ENCODE measurements at regions of chr7 and their contacts with region 1.

Region 1: DNA sequence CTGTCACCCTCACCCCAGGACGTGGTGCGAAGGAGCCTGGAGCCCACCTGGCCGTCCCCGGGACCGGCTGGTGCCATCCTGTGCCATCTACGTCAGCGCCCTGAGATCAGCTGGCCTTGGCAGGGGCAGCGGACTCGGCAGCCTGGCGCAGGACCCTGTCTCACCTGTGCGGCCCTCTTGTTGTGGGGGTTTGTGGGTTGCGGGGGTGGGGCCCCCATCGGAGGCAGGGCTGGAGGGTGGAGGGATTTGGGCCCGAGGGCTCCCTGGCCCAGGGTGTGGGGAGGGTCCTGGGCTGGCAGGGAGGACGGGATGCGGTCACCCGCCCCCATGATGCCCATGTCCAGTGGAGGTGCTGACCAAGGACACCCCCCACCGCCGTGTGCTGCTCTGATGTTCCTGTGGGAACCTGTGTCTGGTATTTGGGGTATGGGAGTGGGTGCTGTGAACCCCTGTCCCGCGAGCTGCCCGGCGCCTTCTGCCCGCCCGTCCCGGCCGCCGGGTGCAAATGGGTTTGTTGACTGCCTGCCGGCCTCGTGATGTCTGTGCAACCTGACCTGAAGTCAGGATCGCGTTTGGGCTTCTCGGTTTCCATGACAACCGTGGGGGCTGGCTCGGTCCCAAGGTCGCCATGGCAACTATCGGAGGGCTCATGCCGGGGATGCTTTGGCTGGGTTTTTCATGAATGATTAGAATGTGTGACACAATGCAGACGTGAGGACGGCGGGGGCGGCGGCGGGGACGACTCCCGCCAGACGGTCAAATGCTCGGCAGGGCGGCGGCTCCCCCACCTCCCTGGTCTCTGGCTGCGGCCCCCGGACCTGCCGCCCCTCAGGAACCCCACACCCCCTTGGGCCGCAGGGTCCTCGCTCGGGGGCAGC is 7.3 kb downstream of the MAFK start:
- DNase-seq: peak in 1 of 2 experiments; percentile 89
- H3K4me3 ChIP-seq: peak overlapping the region; percentile 53
- H3K27ac ChIP-seq: peak overlapping the region; percentile 69
- H3K4me1 ChIP-seq: peaks cover 47% of the 10 kb centered on the region
- H3K27me3 ChIP-seq: no peaks in the 10 kb centered on the region
- CTCF ChIP-seq: no peak

Region 2: DNA sequence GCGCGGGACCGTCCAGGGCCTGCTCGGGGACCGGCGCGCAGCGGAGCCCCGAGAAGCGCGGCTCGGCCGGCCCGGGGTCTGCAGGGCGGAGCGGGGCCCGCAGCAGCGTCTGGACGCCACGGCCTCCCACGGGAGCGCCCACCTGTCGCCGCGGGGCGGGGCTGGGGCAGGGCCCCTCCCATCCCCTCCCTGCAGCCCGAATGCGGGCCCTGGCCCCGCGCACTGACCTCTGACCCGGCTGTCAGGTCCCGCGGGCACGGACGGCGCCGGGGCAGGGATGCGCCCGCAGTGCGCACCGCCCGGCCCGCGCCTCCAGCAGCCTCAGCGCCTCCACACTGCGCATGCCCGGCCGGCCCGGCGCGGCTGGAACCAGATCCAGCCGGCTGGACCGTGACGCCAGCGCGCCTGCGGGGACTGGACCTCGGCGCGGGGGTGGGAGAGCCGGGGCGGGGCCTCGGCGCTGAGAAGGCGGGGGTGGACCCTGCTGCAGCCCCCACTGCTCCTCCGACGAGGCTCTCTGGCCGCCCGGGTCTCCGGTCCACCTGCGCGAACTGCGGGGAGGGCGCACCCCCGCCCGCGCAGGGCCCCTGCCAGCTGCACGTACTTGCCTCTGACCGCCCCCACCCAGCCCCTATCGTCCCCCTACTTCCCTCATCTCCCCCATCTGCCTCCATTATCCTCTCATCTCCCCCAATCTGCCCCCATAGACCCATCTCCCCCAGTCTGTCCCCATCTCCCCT is 509.6 kb before region 1 on chr7:
- CTCF ChIA-PET with region 1: no interaction called
- POLR2A ChIA-PET with region 1: no interaction called
- intact Hi-C with region 1: no loop called
- DNase-seq: peak; percentile 59 to 95
- H3K4me3 ChIP-seq: peak overlapping the region; percentile 69
- H3K27ac ChIP-seq: peak overlapping the region; percentile 35; the same call in 1 of the 2 replicates
- H3K4me1 ChIP-seq: peaks cover 14% of the 10 kb centered on the region
- H3K27me3 ChIP-seq: no peaks in the 10 kb centered on the region
- CTCF ChIP-seq: no peak

Region 3: GRCh38 chr7:1512781-1513656 is 24.8 kb before region 1 on chr7:
- CTCF ChIA-PET with region 1: interaction called, 12 read pairs
- POLR2A ChIA-PET with region 1: no interaction called
- intact Hi-C with region 1: loop called (anchors 2 kb)
- DNase-seq: peak; percentile 96
- H3K4me3 ChIP-seq: no peak overlapping the region
- H3K27ac ChIP-seq: peak overlapping the region; percentile 77
- H3K4me1 ChIP-seq: peaks cover 48% of the 10 kb centered on the region
- H3K27me3 ChIP-seq: no peaks in the 10 kb centered on the region
- CTCF ChIP-seq: no peak

Region 4: GRCh38 chr7:1520574-1521234 is 17.1 kb before region 1 on chr7:
- CTCF ChIA-PET with region 1: interaction called, 4 read pairs
- POLR2A ChIA-PET with region 1: no interaction called
- intact Hi-C with region 1: loop called (anchors 1 kb)
- DNase-seq: peak; percentile 97 to 100
- H3K4me3 ChIP-seq: peak overlapping the region; percentile 16; the same call in 1 of the 2 replicates
- H3K27ac ChIP-seq: peak overlapping the region; percentile 89
- H3K4me1 ChIP-seq: peaks cover 29% of the 10 kb centered on the region
- H3K27me3 ChIP-seq: no peaks in the 10 kb centered on the region
- CTCF ChIP-seq: no peak

Region 5: DNA sequence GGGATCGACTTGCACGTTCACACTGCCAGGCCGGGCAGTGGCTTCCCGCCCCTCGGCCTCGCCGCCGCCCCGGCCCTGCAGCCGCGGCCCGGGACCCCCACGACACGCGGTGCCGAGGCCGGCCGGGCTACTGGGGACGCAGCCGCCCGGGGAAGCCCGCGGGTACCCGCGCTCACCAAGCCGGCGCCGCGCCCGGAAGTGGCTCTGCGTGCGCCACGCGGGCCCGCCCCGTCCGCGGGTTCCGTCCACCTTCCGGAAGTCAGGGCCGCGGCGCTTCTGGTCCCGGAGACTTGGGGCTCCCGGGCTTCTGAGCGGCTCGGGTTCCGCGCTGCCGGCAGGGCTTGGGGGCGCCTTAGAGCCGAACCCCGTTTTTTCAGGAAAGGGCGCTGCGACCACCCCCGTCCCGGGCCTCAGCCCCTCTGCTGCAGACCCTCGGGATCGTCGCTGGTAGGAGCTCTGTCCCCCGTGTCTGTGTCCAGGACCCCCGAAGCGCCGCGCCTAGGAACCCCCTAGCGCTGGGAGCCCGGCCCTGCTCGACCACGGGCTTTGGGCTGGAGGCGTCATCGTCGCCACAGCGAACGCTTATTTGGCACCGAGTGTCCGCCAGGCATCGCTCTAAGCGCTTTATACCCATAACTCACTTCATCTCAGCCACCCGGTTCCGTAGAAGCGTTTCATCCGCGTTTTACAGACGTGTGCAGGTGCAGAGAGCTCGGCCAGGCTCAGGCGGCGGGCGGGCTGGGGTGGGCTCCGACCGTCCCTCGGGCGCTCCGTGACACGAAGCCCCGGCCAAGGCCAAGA is 32.3 kb after region 1 on chr7 and contains the start of gene PSMG3:
- CTCF ChIA-PET with region 1: no interaction called
- POLR2A ChIA-PET with region 1: interaction called, 3 read pairs
- intact Hi-C with region 1: loop called (anchors 1 kb)
- DNase-seq: peak; percentile 80 to 93
- H3K4me3 ChIP-seq: peak within 1 kb of the TSS; percentile 97
- H3K27ac ChIP-seq: peak within 1 kb of the TSS; percentile 65
- H3K4me1 ChIP-seq: peaks cover 34% of the 10 kb centered on the region
- H3K27me3 ChIP-seq: no peaks in the 10 kb centered on the region
- CTCF ChIP-seq: peak; percentile 44; the same call in 1 of the 2 replicates
- total RNA-seq, gene PSMG3: 63.3 and 78.9 TPM in 2 replicates

Region 6: GRCh38 chr7:1691096-1691495 is 153.3 kb after region 1 on chr7:
- CTCF ChIA-PET with region 1: no interaction called
- POLR2A ChIA-PET with region 1: no interaction called
- intact Hi-C with region 1: no loop called
- DNase-seq: no peak
- H3K4me3 ChIP-seq: no peak overlapping the region
- H3K27ac ChIP-seq: no peak overlapping the region
- H3K4me1 ChIP-seq: no peaks in the 10 kb centered on the region
- H3K27me3 ChIP-seq: peaks cover 74% of the 10 kb centered on the region
- CTCF ChIP-seq: no peak

Region 7: DNA sequence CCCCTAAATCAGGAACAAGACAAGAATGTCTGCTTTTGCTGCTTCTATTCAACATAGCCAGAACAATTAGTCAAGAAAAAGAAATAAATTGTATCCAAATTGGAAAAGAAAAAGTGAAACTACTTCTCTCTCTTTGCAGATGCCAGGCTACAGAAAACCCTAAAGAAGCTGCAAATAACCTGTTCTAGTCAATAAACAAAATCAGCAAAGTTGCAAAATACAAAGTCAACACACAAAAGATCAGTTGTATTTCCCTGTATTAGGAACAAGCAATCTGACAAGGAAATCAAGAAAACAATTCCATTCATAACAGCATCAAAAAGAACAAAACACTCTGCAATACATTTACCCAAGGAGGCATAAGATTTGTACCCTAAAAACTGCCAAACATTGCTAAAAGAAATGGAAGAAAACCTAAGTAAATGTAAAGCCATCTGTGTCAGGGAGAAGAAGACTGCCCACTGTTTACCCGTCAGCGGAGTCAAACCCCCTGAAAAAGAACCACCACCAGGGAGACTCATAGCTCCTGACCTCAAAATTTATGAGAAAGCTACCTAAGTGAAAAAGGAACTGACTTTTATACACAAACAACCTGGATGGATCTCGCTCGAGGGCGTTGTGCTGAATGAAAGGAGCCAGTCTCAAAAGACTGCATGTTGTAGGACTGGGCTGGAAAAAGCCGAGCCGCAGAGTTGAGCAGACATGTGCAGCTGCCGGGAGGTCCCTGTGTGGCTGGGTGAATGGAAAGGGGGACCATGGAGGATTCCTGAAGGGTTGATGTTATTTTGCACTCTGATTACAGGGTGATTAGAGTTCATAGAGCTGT is 431.9 kb after region 1 on chr7:
- CTCF ChIA-PET with region 1: no interaction called
- POLR2A ChIA-PET with region 1: no interaction called
- intact Hi-C with region 1: no loop called
- DNase-seq: no peak
- H3K4me3 ChIP-seq: no peak overlapping the region
- H3K27ac ChIP-seq: no peak overlapping the region
- H3K4me1 ChIP-seq: no peaks in the 10 kb centered on the region
- H3K27me3 ChIP-seq: no peaks in the 10 kb centered on the region
- CTCF ChIP-seq: no peak

Region 8: DNA sequence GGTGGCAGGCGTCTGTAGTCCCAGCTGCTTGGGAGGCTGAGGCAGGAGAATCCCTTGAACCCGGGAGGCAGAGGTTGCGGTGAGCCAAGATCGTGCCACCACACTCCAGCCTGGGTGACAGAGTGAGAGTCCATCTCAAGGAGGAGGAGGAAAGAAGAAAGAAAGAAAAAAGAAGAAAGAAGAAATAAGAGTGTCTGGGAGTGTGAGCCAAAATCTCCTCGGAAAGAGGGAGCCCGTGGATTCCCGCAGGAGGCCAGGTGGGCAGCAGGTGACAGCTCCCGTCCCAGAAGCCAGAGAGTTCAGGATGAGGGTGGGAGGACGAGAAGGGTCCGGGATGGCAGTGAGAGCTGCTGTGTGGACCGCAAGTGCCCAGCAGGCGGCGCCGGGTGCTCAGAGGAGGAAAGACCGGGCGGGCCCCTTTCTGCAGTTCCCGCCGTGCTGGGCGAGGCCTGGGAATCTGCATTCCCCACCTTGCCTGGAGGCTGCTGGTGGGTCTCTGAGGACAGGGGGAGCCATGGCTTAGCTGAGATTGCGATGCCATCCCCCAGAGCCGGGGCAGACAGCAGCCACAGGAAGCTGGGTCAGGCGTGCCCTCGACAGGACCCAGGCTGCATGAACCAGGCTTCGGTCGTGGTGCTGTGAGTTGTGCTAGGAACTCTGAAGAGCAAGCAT is 1133.1 kb after region 1 on chr7:
- CTCF ChIA-PET with region 1: no interaction called
- POLR2A ChIA-PET with region 1: no interaction called
- intact Hi-C with region 1: no loop called
- DNase-seq: peak in 1 of 2 experiments; percentile 61
- H3K4me3 ChIP-seq: peak overlapping the region; percentile 1; the same call in 1 of the 2 replicates
- H3K27ac ChIP-seq: no peak overlapping the region
- H3K4me1 ChIP-seq: 0 out of 2 replicates have a peak, but pooled peaks cover 5% of the 10 kb centered on the region
- H3K27me3 ChIP-seq: no peaks in the 10 kb centered on the region
- CTCF ChIP-seq: peak; percentile 91